ENCODE measurements at regions of chr17 and their contacts with region 1.

Region 1: GRCh38 chr17:66625311-66625775 is 209.6 kb upstream of the CACNG5 start:
- DNase-seq: no peak
- ATAC-seq: peak; percentile 77
- H3K4me3 ChIP-seq: no peak overlapping the region
- H3K27ac ChIP-seq: no peak overlapping the region
- H3K4me1 ChIP-seq: no peaks in the 10 kb centered on the region
- H3K27me3 ChIP-seq: no peaks in the 10 kb centered on the region
- CTCF ChIP-seq: peak in 2 of 3 experiments; percentile 9 to 14; a peak in 2 of 6 replicates
- EP300 ChIP-seq: no peak
- POLR2A ChIP-seq: no peak
- RAD21 ChIP-seq: peak; percentile 41; the same call in 1 of the 2 replicates

Region 2: DNA sequence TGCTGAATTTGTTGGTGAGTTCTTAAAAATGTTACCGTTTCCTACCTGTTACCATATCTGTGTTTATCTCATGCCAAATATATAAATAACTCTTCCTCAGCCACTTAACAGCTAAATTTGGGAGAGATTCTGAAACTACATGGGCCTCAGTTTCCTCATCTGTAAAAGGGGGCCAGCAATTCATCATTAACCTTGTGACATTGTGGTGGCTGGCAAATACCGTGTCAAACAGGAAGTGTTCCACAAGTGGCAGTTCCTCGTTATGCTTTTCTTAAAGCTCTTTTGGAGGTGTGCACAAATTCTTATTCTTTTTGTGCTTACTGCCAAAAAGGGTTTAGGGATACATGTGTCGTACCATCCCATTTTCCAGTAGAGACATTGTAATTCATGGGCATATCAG is 10.9 kb before region 1 on chr17:
- CTCF ChIA-PET with region 1: interaction called, 8 read pairs
- POLR2A ChIA-PET with region 1: no interaction called
- RAD21 ChIA-PET with region 1: interaction called, 5 read pairs
- SMC1A ChIA-PET with region 1: interaction called, 11 read pairs
- in situ Hi-C with region 1: no loop called
- intact Hi-C with region 1: no loop called
- DNase-seq: no peak
- ATAC-seq: peak; percentile 58
- H3K4me3 ChIP-seq: no peak overlapping the region
- H3K27ac ChIP-seq: no peak overlapping the region
- H3K4me1 ChIP-seq: no peaks in the 10 kb centered on the region
- H3K27me3 ChIP-seq: no peaks in the 10 kb centered on the region
- CTCF ChIP-seq: no peak
- EP300 ChIP-seq: no peak
- POLR2A ChIP-seq: no peak
- RAD21 ChIP-seq: no peak

Region 3: DNA sequence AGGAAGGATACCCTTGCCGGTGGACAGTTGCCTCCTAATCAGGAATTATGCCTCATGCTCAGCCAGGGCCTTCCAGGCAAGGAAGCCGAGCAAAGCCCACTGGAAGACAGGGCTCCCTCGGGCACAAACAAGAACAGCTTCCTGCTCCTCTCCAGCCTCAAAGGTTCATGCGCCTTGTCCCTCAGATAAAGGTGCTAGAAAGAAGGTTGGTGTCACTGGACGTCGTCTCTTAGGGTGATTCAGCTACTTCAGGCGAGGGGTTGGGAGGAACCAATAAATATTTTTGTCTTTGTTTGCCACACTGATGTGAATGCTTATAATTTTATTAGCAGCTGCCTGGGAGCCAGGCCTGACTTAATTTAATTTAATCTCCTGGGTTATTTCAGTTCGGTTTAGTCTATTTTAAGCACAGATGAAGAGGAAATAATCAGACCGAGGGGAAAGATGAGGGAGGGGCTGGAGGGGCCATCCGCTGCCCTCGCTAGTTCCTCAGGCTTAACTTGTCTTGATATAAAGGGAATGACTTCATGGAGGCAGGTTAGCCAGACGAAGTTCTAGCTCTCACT is 37.8 kb after region 1 on chr17:
- CTCF ChIA-PET with region 1: no interaction called
- POLR2A ChIA-PET with region 1: no interaction called
- RAD21 ChIA-PET with region 1: no interaction called
- SMC1A ChIA-PET with region 1: no interaction called
- in situ Hi-C with region 1: no loop called
- intact Hi-C with region 1: no loop called
- DNase-seq: no peak
- ATAC-seq: no peak
- H3K4me3 ChIP-seq: no peak overlapping the region
- H3K27ac ChIP-seq: no peak overlapping the region
- H3K4me1 ChIP-seq: no peaks in the 10 kb centered on the region; the same call in 1 of the 2 replicates
- H3K27me3 ChIP-seq: 0 out of 4 replicates have a peak, but pooled peaks cover 0 to 2% of the 10 kb centered on the region in 2 experiments
- CTCF ChIP-seq: no peak
- EP300 ChIP-seq: no peak
- POLR2A ChIP-seq: no peak
- RAD21 ChIP-seq: no peak